ENCODE measurements at regions of chr11 and their contacts with region 1.

Region 1: DNA sequence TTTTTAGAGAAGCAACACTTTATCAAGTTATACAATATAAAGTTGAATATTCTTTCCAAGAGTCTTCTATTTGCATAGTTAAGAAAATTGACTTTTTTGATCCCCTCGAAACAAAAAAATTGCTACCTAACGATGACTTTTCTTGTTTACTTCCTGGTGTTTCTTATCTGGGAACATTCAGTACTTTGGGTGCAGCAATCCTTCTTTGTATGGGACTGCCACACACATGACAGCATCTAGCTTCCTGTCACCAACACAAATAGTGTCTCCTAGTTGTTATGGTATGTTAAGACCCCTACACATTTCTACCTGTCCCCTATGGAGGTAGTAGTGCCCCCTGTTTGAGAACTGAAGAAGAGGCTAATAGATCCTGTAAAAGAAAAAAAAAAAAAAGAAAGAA is 841.7 kb upstream of the FAT3 start:
- DNase-seq: no peak
- CTCF ChIP-seq: no peak

Region 2: DNA sequence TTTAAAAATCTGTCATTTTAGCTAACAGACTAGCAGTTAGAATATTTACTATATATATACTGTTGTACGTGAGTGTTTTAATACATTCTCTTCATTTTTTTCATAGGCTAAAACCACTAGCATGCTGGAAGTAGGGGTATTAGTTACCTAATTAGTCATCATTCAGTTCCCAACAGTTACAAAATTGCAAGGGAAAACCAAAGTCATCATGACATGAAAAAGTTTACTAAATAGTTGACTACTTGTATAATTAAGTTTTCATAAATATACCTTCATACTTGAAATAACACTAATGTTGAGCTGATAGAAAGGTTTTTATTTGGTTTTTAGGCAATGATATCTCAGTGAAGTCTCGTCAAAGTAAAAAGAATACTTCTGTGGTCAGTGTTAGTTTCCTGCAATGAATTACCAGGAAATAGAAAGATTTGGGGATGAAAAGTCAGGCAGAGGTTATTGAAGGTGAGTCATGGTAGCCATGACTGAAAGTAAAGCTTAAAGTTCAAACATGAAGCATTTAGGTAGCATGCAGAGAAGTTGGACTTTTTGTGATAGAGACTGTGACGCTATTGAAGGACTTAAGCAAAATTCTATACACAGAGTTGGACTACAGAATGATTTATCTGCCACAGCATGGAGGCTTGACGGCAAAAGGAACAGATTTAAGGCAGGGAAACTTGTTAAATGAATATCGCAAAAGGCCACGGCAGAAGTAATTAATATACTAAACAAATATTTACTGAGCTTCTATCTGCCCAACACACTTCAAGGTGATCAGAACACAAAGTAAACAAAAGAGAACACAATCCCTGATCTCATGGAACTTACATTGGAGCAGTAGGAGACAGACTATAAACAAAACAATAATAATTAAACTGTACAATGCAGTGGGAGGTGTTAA is 13.5 kb after region 1 on chr11:
- CTCF ChIA-PET with region 1: interaction called, 12 read pairs
- POLR2A ChIA-PET with region 1: no interaction called
- DNase-seq: no peak
- CTCF ChIP-seq: no peak

Region 3: GRCh38 chr11:91641153-91641552 is 258.2 kb after region 1 on chr11:
- CTCF ChIA-PET with region 1: no interaction called
- POLR2A ChIA-PET with region 1: no interaction called
- DNase-seq: no peak
- CTCF ChIP-seq: no peak

Measured in GM10248 (cell line).